ENCODE measurements at regions of chr14 and their contacts with region 1.

Region 1: GRCh38 chr14:74109369-74109768 is 24.6 kb downstream of the LIN52 start:
- DNase-seq: no peak
- ATAC-seq: no peak
- H3K4me3 ChIP-seq: no peak overlapping the region
- H3K27ac ChIP-seq: no peak overlapping the region
- H3K4me1 ChIP-seq: no peaks in the 10 kb centered on the region
- H3K27me3 ChIP-seq: no peaks in the 10 kb centered on the region
- CTCF ChIP-seq: no peak

Region 2: GRCh38 chr14:74257078-74257989 is 148.0 kb after region 1 on chr14:
- intact Hi-C with region 1: loop called (anchors 10 kb)
- DNase-seq: peak; percentile 66
- ATAC-seq: peak; percentile 94
- H3K4me3 ChIP-seq: peak overlapping the region; percentile 68
- H3K27ac ChIP-seq: no peak overlapping the region
- H3K4me1 ChIP-seq: peaks cover 16% of the 10 kb centered on the region
- H3K27me3 ChIP-seq: peaks cover 9% of the 10 kb centered on the region
- CTCF ChIP-seq: peak; percentile 98